Adrenal gland (tissue), 19 donors: ENCODE measurements at regions of chr2 and their contacts with region 1.

Region 1: GRCh38 chr2:230798769-230799399 is 65.9 kb upstream of the ITM2C start:
- DNase-seq: peak in 1 of 7 donors; percentile 41
- H3K4me3 ChIP-seq: no peak overlapping the region
- H3K27ac ChIP-seq: no peak overlapping the region
- H3K4me1 ChIP-seq: peaks cover 6 to 38% of the 10 kb centered on the region in 2 donors
- H3K27me3 ChIP-seq: no peaks in the 10 kb centered on the region
- CTCF ChIP-seq: peak; percentile 45 to 68 (median 52)
- POLR2A ChIP-seq: no peak

Region 2: DNA sequence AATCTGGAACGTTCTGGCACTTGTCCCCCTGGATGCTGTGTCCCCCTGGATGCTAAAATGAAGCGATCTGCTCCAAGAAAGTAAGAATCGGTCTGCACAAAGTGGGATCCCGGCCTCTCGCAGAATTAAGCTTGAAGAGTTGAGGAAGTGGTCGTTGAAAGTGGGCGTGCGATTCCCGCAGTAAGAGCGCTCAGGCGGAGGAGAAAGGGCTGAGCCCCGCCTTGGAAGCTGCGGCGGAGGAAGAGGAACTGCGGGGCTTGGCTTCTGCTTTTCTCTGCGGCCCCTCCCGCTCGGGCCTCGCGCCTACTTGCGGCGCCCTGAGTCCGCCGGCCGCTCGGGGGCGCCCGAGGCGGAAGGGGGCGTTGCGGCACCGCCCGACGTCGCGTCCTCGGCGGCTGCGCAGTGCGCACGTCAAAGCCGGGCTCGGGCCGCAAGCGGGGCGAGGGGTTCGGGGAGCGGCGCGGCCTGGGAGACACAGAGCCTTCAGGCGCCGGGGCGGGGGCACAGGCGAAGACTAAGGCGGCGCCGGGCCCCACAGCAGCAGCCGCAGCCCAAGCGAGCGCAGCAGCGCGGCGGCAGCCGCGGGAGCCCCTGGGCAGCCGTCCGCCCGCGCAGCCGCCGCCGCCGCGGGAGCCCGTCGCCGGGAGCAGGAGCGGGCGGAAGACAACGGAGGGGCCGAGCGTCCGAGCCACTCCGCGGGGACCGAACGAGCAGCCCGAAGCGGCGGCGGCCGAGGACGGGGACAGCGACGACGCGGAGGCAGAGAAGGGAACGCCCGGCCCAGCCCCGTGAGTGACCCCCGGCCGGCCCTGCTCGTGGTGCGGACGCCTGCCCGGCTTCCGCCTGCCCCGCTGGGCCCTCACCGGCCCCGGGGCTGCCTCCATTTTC is 86.2 kb before region 1 on chr2 and contains the start of gene CAB39:
- intact Hi-C with region 1: loop called (anchors 2 to 10 kb)
- DNase-seq: peak; percentile 79 to 89 (median 86)
- H3K4me3 ChIP-seq: peak within 1 kb of the TSS; percentile 37 to 94 (median 73)
- H3K27ac ChIP-seq: peak within 1 kb of the TSS; percentile 71 to 98 (median 94)
- H3K4me1 ChIP-seq: peaks cover 9 to 31% of the 10 kb centered on the region in 2 donors
- H3K27me3 ChIP-seq: no peaks in the 10 kb centered on the region
- CTCF ChIP-seq: peak; percentile 22 to 96 (median 68)
- POLR2A ChIP-seq: peak; percentile 69 to 88
- total RNA-seq, gene CAB39: 47.1 to 96.1 (median 56.8) TPM